ENCODE measurements at regions of chr12 and their contacts with region 1.

Region 1: DNA sequence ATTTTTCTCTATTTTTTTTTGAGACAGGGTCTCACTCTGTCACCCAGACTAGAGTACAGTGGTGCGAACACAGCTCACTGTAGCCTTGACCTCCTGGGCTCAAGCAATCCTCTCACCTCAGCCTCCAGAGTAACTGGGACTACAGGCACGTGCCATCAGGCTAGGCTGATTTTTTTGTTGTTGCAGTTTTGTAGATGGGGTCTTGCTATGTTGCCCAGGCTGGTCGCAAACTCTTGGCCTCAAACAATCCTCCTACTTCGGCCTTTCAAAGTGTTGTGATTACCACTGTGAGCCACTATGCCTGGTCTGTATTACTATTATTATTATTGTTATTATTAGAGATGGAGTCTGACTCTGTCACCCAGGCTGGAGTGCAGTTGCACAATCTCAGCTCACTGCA is 23.3 kb downstream of the GIT2 start:
- DNase-seq: no peak
- ATAC-seq: no peak
- H3K4me3 Mint-ChIP-seq: no peak overlapping the region
- H3K27ac Mint-ChIP-seq: no peak overlapping the region
- H3K4me1 Mint-ChIP-seq: peaks cover 22% of the 10 kb centered on the region
- H3K27me3 Mint-ChIP-seq: no peaks in the 10 kb centered on the region

Region 2: DNA sequence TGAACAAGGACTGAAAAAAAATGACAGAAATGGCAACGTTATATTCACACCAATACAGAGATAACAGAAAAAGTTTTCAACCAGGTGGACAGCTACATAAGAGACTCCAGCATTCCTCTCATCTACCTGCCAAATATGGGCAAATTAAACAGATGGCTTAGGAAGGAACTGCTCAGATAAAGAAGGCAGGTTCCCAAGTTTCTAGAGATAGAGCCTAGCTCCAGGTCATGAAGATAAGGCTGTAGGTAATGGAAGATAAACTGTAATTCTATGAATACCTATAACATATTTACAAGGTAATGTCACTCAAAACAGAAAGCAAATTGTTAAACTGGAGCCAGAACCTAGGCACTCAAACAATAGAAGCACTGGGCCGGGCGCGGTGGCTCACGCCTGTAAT is 19.2 kb before region 1 on chr12:
- CTCF ChIA-PET with region 1: no interaction called
- POLR2A ChIA-PET with region 1: no interaction called
- intact Hi-C with region 1: no loop called
- DNase-seq: no peak
- ATAC-seq: no peak
- H3K4me3 Mint-ChIP-seq: no peak overlapping the region
- H3K27ac Mint-ChIP-seq: no peak overlapping the region
- H3K4me1 Mint-ChIP-seq: peaks cover 8% of the 10 kb centered on the region
- H3K27me3 Mint-ChIP-seq: no peaks in the 10 kb centered on the region

Region 3: DNA sequence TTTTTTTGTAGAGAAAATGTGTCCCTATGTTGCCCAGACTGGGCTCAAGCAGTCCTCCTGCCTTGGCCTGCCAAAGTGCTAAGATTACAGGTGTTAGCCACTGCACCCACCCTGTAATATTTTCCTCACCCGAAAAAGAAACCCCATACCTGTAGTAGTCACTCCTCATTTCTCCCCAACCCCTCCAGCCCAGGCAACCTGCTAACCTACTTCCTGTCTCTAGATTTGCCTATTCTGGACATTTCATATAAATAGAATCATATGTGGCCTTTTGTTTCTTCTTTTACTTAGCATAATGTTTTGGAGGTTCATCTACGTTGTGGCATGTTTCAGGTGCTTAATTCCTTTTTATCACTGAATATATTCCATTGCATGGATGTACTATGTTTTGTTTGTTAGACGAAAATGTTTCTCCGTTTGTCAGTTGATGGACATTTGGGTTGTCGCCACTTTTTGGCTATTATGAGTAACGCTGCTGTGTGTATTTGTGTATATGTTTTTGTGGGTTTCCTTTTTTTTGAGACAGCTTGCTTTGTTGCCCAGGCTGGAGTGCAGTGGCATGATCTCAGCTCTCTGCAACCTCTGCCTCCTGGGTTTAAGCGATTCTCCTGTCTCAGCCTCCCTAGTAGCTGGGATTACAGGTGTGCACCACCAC is 32.6 kb after region 1 on chr12:
- CTCF ChIA-PET with region 1: no interaction called
- POLR2A ChIA-PET with region 1: no interaction called
- intact Hi-C with region 1: loop called in 1 of 2 experiments (anchors 5 kb)
- DNase-seq: peak; percentile 45
- ATAC-seq: peak; percentile 48
- H3K4me3 Mint-ChIP-seq: peak overlapping the region; percentile 49
- H3K27ac Mint-ChIP-seq: peak overlapping the region; percentile 80
- H3K4me1 Mint-ChIP-seq: peaks cover 89% of the 10 kb centered on the region
- H3K27me3 Mint-ChIP-seq: no peaks in the 10 kb centered on the region

Measured in activated CD4-positive, alpha-beta T cell treated with anti-CD3 and anti-CD28 coated beads for 36 hours (primary cell).